Head of caudate nucleus (tissue), 42 donors: ENCODE measurements at regions of chr20 and their contacts with region 1.

Region 1: DNA sequence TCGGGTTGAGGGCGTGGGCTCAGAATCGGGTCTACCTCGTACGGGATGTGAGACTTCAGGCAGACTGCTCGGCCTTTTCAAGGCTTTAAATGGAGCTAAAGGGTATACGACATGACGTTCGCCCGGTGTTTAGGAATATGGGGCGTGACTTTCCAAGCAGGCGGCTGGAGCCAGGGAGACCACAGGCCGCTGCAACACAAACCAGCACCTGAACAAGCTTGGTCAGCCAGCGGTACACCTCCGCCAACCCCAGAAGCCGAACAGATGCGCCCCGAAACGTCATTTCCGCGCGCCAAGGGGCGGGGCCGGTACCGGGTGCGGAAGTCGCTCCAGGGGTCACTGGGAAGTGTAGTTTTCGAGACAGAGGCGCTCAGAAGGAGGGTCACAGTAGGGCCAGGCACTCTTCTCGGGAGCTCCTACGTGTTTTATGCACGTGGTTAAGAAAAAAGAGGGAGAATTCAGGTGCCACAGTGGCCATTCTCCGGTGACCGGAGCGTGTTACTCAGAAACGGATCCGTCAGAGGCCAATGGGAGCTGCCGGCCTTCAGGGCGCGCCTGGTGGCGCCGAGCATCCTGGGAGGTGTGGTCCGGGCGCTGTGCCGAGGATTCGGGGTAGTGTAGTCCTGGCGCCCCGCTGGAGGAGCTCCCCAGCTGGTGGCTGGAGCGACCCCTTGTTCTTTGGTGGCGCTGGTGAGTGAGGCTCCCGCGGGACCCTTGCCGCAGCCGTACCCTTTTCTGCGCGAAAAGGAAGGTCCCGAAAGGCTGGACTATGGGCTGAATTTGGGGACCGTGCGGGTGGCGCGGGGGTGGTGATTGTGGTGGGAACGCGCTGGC is at the start of gene ZNF133:
- DNase-seq: peak; percentile 94 to 99 (median 98)

Region 2: GRCh38 chr20:17968366-17969279 is 319.5 kb before region 1 on chr20 and contains the starts of genes MGME1 and SNX5:
- intact Hi-C with region 1: loop called (anchors 10 kb)
- DNase-seq: peak; percentile 97 to 100 (median 99)

Region 3: GRCh38 chr20:18137412-18138265 is 150.5 kb before region 1 on chr20 and contains the starts of genes KAT14 and PET117:
- intact Hi-C with region 1: loop called (anchors 10 kb)
- DNase-seq: peak; percentile 68 to 96 (median 92)

Region 4: DNA sequence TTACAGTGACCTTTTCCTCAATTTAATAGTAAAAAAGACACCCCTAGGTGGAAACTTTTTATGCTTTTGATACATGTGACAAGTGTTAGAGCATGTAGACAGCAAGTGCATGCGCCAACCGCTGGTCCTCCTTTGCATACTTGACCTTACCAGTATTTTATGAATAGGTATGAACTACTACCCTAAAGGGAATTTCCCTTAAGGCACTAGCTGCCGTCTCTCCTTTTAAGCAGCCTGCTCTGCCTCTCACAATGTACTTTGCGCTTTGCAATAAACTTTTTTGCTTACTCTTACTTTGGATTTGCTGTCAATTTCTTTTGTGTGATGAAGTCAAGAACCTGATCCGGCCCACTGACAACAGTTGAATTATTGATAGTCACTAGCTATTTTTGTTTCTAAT is 50.5 kb before region 1 on chr20:
- intact Hi-C with region 1: no loop called
- DNase-seq: no peak

Region 5: DNA sequence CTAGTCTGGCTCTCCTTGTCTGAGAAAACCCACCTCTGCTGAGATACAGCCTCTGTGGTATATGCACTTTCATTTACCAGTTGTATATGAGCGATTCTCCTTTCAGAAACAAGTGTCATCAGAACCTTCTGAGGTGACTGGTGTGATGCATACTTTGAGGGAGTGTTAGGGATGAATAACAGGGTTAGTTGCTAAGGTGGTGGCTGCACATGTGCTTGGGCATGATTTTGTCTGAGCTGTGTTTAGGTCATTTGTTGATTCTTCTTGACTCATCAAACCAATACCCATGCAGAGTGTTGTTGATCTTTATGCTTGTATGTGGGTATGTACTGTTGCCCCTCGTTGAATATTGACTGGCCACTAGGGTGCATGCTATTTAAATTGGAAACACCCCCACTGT is 325.4 kb after region 1 on chr20:
- intact Hi-C with region 1: no loop called
- DNase-seq: no peak

Region 6: DNA sequence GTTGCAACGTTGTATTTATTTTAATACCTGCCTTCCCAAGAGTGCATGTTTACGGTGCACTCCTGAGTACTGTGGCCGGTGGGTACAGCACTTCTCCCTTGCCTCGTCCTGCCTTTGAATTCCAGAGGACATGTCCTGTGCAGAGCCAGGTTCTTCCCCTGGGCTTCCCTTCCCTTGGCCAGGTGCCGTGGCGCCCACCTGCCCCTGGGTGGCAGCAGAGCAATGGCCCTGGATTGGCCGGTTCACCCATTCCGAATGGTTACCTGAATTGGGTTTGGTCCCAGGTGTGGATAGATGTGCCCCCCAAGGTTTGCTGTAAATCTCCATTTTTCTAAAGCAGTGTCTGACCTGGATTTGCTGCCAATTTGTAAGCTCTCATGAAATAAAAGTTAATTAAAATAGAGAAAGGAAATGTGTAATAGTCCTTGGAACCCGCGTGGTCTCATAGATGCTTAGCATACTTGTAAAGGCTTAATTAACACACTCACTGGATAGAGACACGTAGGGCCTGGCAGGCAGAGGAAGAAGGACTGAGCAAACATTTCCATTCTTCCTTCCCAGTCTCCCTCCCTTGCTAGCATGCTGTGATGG is 340.3 kb after region 1 on chr20:
- intact Hi-C with region 1: no loop called
- DNase-seq: peak in 27 of 42 donors; percentile 17 to 61 (median 33)

Region 7: GRCh38 chr20:18793625-18794427 is 505.7 kb after region 1 on chr20:
- intact Hi-C with region 1: loop called (anchors 10 kb)
- DNase-seq: peak; percentile 89 to 97 (median 94)